ENCODE measurements at regions of chr1 and their contacts with region 1.

Region 1: DNA sequence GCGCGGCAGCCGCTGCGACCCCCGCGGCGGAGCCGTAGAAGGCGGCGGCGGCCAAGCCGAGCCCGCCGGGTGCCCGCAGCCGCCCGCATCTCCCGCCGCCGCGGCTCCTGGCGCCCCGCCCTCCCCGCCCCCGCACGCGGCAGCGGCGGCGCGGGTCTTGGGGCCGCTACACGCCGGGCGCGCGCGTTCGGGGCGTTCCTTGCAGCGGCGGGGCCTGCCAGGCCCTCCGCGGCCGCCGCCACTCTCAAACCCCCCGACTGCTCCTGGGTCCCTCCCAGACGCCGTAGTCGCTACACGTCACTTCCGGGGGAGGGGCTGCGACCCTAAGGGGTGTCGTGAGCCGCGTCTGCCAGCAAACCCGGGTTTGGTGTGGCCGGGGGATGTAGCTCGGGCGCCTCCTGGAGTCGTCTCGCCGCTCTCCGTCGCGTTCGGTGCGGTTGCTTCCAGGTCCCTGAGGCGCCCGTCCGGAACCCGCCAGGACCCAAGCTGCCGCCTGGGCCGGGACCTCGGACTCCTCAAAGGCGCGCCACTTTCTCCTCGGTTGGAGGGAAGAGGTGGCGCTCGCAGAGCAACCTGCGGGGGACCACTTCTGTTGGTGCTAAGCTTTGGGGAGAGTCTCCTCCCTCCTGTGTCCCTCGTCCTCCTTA is at the start of gene ELK4:
- DNase-seq: peak; percentile 99
- H3K4me3 Mint-ChIP-seq: peak within 1 kb of the TSS; percentile 88
- H3K27ac Mint-ChIP-seq: peak within 1 kb of the TSS; percentile 96
- H3K4me1 Mint-ChIP-seq: peaks cover 37% of the 10 kb centered on the region
- H3K27me3 Mint-ChIP-seq: peaks cover 4% of the 10 kb centered on the region
- total RNA-seq, gene ELK4: 80.6 to 83.0 TPM

Region 2: GRCh38 chr1:205495237-205495823 is 136.5 kb before region 1 on chr1:
- CTCF ChIA-PET with region 1: no interaction called
- POLR2A ChIA-PET with region 1: no interaction called
- DNase-seq: no peak
- H3K4me3 Mint-ChIP-seq: no peak overlapping the region
- H3K27ac Mint-ChIP-seq: no peak overlapping the region
- H3K4me1 Mint-ChIP-seq: peaks cover 9% of the 10 kb centered on the region
- H3K27me3 Mint-ChIP-seq: peaks cover 4% of the 10 kb centered on the region

Region 3: DNA sequence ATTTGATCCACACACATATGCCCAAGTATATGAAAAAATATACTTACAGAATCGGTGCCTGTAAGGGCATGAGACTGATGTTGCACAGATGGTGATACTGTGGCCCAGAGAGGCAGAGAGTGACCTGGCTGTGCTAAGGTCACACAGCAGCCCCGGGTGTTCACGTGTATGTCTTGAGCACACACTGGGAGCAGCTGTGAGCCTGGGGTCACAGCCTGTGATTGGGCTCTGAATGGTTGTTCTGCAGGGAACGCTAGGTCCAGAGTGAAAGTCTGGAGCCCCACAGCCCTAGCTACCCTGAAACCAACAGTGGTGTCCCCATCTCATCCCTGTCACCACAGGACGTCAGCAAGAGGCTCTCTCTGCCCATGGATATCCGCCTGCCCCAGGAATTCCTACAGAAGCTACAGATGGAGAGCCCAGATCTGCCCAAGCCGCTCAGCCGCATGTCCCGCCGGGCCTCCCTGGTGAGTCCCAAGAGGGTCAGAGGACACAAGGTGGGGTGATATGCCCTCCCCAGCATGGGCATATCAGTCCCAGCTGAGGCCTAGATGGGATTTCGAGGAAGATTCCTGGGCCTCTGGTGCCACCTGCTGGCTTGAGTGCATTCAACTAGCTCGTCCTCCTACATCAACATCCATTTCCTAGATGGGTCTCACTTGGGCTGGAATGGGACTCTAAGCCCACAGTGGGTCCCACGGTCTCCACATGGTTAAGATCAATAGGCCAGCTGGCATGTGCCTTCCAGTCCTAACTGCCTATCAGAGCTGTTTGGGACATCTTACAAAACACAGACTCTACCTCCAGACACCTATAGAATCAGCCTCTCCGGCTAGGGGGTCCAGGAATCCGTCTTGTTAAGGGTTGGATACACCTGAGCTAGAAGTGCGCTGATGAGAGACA is 107.7 kb before region 1 on chr1:
- CTCF ChIA-PET with region 1: interaction called, 18 read pairs
- POLR2A ChIA-PET with region 1: interaction called, 8 read pairs
- DNase-seq: peak; percentile 76
- H3K4me3 Mint-ChIP-seq: no peak overlapping the region
- H3K27ac Mint-ChIP-seq: no peak overlapping the region
- H3K4me1 Mint-ChIP-seq: no peaks in the 10 kb centered on the region
- H3K27me3 Mint-ChIP-seq: no peaks in the 10 kb centered on the region

Region 4: DNA sequence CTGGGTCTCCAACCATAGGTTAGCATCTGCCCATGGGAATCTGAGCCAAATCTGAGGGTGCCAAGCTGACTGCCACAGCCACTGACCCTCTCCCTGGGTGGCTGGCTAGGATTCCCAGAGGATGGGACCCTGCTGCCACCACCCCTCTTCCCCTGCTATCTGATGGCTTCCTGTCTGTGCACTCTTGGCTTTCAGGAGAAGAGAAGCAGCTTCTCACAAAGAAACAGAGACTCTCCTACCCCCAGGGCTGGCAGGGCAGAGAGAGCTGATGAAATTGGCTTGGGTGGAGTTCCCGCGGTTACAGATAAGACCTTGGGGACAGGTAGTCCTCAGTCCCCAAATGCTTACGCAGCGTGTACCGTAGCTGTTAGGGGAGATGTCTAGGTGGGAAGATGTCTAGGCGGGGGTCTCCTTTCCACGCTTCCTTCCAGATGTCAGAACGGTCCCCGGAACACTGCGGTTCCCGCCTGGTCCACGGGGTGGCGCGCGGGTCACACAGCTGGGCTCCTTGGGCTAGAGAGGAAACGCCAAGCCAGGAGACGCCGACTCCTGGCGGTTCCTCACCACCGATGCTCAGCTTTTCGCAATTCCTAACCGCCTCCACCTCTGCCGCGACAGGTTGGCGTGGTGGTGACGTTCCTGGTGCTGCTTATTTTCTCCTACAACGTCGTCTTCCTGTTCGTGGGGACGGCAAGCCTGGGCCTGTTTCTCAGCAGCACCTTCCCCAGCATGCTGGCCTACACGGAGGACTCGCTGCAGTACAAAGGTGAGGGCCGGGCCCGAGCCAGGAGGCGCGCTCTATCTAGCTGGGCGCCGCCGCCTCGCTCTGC is 40.1 kb before region 1 on chr1:
- CTCF ChIA-PET with region 1: interaction called, 257 read pairs
- POLR2A ChIA-PET with region 1: interaction called, 165 read pairs
- DNase-seq: peak; percentile 89
- H3K4me3 Mint-ChIP-seq: peak overlapping the region; percentile 74
- H3K27ac Mint-ChIP-seq: peak overlapping the region; percentile 64
- H3K4me1 Mint-ChIP-seq: peaks cover 44% of the 10 kb centered on the region
- H3K27me3 Mint-ChIP-seq: no peaks in the 10 kb centered on the region

Region 5: DNA sequence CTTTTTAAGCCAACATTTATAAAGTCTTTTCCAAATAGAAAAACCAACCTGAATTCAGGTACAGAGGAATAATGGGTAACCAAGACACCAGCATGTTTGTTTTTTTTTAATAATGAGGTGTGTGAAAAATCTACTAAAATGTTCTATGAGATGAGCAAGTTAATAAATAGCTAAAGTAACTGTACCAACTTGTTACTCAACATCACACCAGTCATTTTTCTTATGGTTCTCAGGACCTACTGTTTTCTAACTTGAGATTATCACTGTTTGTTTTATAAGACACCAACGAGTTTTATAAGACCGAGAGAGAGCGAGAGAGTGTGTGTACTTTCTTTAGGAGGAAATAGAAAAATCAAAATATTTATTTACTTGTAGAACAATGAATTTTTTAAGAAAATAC is 12.5 kb before region 1 on chr1:
- CTCF ChIA-PET with region 1: interaction called, 6 read pairs
- POLR2A ChIA-PET with region 1: interaction called, 11 read pairs
- DNase-seq: no peak
- H3K4me3 Mint-ChIP-seq: no peak overlapping the region
- H3K27ac Mint-ChIP-seq: no peak overlapping the region
- H3K4me1 Mint-ChIP-seq: peaks cover 14% of the 10 kb centered on the region
- H3K27me3 Mint-ChIP-seq: no peaks in the 10 kb centered on the region

Region 6: GRCh38 chr1:205750138-205751035 is 118.5 kb after region 1 on chr1 and contains the start of gene NUCKS1:
- CTCF ChIA-PET with region 1: no interaction called
- POLR2A ChIA-PET with region 1: interaction called, 25 read pairs
- DNase-seq: peak; percentile 97
- H3K4me3 Mint-ChIP-seq: peak within 1 kb of the TSS; percentile 87
- H3K27ac Mint-ChIP-seq: peak within 1 kb of the TSS; percentile 96
- H3K4me1 Mint-ChIP-seq: peaks cover 41% of the 10 kb centered on the region
- H3K27me3 Mint-ChIP-seq: no peaks in the 10 kb centered on the region
- total RNA-seq, gene NUCKS1: 163 to 185 TPM

Region 7: GRCh38 chr1:205879975-205880374 is 248.1 kb after region 1 on chr1:
- CTCF ChIA-PET with region 1: no interaction called
- POLR2A ChIA-PET with region 1: no interaction called
- DNase-seq: no peak
- H3K4me3 Mint-ChIP-seq: no peak overlapping the region
- H3K27ac Mint-ChIP-seq: no peak overlapping the region
- H3K4me1 Mint-ChIP-seq: no peaks in the 10 kb centered on the region
- H3K27me3 Mint-ChIP-seq: peaks cover 52% of the 10 kb centered on the region